Endothelial cell of umbilical vein (primary cell): ENCODE measurements at regions of chr6 and their contacts with region 1.

Region 1: DNA sequence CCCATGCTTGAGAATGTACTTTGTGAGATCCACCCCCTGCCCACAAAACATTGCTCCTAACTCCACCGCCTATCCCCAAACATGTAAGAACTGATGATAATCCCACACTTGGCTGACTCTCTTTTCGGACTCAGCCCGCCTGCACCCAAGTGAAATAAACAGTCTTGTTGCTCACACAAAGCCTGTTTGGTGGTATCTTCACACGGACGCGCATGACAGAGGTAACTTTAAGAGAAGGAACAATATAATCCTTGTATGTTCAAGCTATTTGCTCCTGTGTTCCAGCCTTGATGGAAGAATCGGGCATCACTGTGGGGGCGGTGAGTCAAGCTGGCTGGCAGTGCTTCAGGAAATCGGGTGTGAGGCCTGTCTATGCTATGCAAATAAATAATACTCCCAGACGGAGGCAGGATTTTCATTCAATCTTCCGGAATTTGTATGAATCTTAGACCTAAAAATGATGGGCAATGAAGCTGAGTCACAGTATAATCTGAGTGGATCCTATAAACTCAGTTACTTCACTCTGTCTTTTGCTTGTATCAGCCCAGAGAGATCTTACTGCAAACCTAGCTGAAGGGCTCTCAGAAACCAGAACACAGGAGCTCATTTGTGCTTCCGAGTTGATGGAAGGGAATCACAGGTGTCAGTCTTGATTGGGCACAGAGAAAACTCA is 45.2 kb upstream of the NT5E start:
- DNase-seq: peak; percentile 93
- H3K4me3 ChIP-seq: peak overlapping the region in 1 of 3 experiments; percentile 14
- H3K27ac ChIP-seq: peak overlapping the region; percentile 94
- H3K4me1 ChIP-seq: peaks cover 55% of the 10 kb centered on the region
- H3K27me3 ChIP-seq: no peaks in the 10 kb centered on the region
- CTCF ChIP-seq: no peak
- POLR2A ChIP-seq: peak; percentile 43

Region 2: DNA sequence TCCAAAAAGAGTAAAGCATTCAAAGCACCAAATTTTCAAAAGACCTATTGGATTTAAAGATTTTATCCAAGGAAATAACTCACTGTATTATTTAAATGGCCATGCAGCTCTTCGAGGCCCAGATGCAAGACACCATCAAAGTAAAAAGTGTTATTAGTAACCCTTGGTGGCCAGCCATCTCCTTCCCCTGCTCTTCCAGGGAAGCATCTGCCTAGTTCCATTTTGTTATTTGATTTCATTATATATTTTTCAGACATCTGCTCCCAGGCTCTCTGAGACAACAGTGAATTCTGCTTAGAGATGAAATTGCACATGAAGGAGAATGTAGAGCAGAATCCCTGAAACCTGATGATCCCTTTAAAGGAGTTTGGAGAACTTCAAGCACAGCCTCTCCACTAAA is 387.9 kb before region 1 on chr6:
- CTCF ChIA-PET with region 1: no interaction called
- POLR2A ChIA-PET with region 1: no interaction called
- dilution Hi-C with region 1: no loop called
- intact Hi-C with region 1: no loop called
- DNase-seq: no peak
- H3K4me3 ChIP-seq: no peak overlapping the region
- H3K27ac ChIP-seq: no peak overlapping the region
- H3K4me1 ChIP-seq: no peaks in the 10 kb centered on the region
- H3K27me3 ChIP-seq: peaks cover 9 to 14% of the 10 kb centered on the region in 2 experiments
- CTCF ChIP-seq: no peak
- POLR2A ChIP-seq: no peak

Region 3: DNA sequence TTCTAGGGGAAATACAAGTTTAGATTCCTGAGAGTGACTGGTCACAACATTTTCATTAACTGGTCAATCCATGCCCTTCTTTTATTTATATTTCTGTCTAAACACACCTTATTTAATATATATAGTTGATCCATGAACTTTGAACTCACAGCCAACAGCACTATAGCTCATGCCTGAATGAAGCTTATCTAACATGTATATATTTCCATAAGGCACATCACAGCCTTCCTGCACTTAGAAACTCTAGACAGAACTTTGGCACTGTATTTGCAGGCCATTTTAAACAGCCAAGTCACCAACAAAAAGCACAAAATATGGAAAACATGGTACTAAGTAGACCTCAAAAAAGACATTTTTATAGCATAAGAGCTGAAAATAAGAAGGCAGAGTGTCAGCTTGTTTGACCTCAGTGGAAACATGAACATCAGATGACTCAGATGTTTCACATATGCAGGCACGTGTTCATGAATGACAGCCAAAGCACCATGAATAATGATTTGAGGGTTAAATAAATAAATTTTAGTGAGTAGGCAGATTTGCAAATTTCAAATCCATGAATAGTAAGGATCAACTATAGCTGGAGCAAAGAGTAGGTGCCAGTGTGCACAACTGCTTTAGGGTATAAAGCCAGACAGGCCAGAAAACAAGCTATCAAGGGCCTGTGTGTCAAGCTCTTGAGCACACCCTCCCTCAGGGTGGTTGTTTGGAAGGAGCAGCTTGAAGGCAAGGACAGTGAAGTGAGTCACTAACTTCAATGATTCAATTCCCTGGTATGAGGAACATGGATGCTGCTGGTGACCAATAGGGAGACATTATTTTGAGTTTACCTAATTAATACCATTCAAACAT is 43.6 kb before region 1 on chr6:
- CTCF ChIA-PET with region 1: interaction called, 21 read pairs
- POLR2A ChIA-PET with region 1: interaction called, 10 read pairs
- dilution Hi-C with region 1: no loop called
- intact Hi-C with region 1: loop called (anchors 1 kb)
- DNase-seq: peak; percentile 70
- H3K4me3 ChIP-seq: no peak overlapping the region
- H3K27ac ChIP-seq: peak overlapping the region; percentile 70
- H3K4me1 ChIP-seq: peaks cover 30% of the 10 kb centered on the region
- H3K27me3 ChIP-seq: no peaks in the 10 kb centered on the region
- CTCF ChIP-seq: no peak
- POLR2A ChIP-seq: no peak

Region 4: GRCh38 chr6:85443349-85444119 is 38.9 kb after region 1 on chr6:
- CTCF ChIA-PET with region 1: interaction called, 20 read pairs
- POLR2A ChIA-PET with region 1: interaction called, 45 read pairs
- dilution Hi-C with region 1: no loop called
- intact Hi-C with region 1: no loop called
- DNase-seq: no peak
- H3K4me3 ChIP-seq: no peak overlapping the region
- H3K27ac ChIP-seq: no peak overlapping the region
- H3K4me1 ChIP-seq: peaks cover 1% of the 10 kb centered on the region
- H3K27me3 ChIP-seq: no peaks in the 10 kb centered on the region
- CTCF ChIP-seq: no peak
- POLR2A ChIP-seq: no peak

Region 5: GRCh38 chr6:85449818-85450759 is 45.5 kb after region 1 on chr6 and contains the start of gene NT5E:
- CTCF ChIA-PET with region 1: interaction called, 33 read pairs
- POLR2A ChIA-PET with region 1: interaction called, 45 read pairs
- dilution Hi-C with region 1: no loop called
- intact Hi-C with region 1: loop called (anchors 1 kb)
- DNase-seq: peak; percentile 79
- H3K4me3 ChIP-seq: peak within 1 kb of the TSS; percentile 61 to 86 (median 69)
- H3K27ac ChIP-seq: peak within 1 kb of the TSS; percentile 84
- H3K4me1 ChIP-seq: peaks cover 23% of the 10 kb centered on the region
- H3K27me3 ChIP-seq: no peaks in the 10 kb centered on the region
- CTCF ChIP-seq: peak in 1 of 2 donors; percentile 1
- POLR2A ChIP-seq: peak; percentile 72
- total RNA-seq, gene NT5E: 48.2 and 115 TPM in 2 replicates

Region 6: DNA sequence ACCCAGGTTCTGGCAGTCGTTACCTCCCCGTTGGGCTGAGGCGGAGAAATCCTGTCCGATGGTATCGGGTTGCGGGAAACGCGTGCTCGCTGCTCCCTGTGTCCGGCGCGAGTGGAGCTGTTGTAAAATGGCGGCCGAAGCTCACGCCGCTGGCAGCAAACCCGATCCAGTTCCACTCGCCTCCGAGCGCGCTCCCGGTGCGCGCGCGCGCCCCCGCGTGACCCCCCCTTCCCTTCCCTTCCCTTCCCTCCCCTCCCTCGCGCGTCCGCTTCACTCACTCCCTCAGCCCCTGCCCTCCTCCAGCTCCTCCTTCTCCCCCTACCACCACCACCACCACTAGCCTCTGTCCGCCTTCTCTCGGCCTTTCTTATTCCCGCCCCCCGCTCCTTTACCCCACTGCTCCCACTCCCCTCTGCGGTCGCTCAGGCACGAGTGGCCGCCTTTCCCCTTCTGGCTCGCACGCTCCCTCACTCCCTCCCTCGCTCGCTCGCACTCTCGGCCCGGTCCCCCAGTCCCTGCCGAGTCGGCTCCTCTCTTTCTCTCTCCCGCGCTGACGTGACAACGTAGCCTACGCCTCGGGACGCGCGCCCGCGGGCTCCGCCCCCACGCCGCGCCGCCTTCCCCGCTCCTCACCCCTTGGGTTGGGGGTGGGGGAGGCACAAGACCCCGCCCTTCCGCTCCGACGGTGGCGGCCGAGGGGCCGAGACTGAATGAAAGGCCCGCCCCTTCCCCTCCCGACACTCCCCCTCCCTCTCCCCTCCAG is 238.3 kb after region 1 on chr6 and contains the start of gene SYNCRIP:
- CTCF ChIA-PET with region 1: no interaction called
- POLR2A ChIA-PET with region 1: no interaction called
- dilution Hi-C with region 1: no loop called
- intact Hi-C with region 1: loop called (anchors 1 kb)
- DNase-seq: peak; percentile 99
- H3K4me3 ChIP-seq: peak within 1 kb of the TSS; percentile 87 to 91 (median 90)
- H3K27ac ChIP-seq: peak within 1 kb of the TSS; percentile 100
- H3K4me1 ChIP-seq: peaks cover 27% of the 10 kb centered on the region
- H3K27me3 ChIP-seq: no peaks in the 10 kb centered on the region
- CTCF ChIP-seq: no peak
- POLR2A ChIP-seq: peak; percentile 97
- total RNA-seq, gene SYNCRIP: 150 and 155 TPM in 2 replicates